ENCODE measurements at regions of chr19 and their contacts with region 1.

Region 1: GRCh38 chr19:2475702-2476450 is at the start of gene GADD45B:
- DNase-seq: peak; percentile 97
- ATAC-seq: peak; percentile 84
- total RNA-seq, gene GADD45B: 42.3 TPM

Region 2: DNA sequence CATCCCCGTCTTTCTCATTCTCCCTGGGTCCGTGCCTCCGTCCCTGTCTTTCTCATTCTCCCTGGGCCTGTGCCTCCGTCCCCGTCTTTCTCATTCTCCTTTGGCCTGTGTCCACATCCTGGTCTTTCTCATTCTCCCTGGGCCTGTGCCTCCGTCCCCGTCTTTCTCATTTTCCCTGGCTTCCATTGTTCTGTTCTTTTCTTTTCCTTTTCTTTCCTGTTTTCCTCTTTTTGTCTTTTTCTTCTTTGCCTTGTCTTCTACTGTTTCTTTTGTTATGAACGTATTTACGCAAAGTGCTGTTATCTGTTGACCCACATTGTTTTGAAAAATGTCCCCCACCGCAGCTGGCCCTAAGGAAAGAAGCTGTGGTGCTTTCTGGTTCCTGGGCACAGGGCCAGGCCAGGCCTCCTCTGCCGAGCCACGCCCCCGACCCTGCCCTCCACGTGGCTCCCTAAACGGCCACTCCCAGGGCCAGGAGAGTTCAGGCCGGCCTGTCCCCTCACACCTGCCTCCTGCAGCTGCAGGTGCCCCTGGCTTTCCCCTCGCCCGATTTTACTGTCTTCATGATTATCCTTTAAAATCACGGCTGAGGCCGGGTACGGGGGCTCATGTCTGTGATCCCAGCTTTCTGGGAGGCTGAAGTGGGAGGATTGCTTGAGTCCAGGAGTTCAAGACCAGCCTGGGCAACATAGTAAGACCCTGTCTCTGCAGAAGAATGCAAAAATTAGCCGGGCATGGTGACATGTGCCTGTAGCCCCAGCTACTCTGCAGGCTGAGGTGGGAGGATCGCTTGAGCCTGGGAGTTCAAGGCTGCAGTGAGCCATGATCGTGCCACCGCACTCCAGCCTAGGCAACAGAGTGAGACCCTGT is 129.8 kb before region 1 on chr19:
- intact Hi-C with region 1: no loop called
- DNase-seq: peak; percentile 74
- ATAC-seq: peak; percentile 63

Region 3: DNA sequence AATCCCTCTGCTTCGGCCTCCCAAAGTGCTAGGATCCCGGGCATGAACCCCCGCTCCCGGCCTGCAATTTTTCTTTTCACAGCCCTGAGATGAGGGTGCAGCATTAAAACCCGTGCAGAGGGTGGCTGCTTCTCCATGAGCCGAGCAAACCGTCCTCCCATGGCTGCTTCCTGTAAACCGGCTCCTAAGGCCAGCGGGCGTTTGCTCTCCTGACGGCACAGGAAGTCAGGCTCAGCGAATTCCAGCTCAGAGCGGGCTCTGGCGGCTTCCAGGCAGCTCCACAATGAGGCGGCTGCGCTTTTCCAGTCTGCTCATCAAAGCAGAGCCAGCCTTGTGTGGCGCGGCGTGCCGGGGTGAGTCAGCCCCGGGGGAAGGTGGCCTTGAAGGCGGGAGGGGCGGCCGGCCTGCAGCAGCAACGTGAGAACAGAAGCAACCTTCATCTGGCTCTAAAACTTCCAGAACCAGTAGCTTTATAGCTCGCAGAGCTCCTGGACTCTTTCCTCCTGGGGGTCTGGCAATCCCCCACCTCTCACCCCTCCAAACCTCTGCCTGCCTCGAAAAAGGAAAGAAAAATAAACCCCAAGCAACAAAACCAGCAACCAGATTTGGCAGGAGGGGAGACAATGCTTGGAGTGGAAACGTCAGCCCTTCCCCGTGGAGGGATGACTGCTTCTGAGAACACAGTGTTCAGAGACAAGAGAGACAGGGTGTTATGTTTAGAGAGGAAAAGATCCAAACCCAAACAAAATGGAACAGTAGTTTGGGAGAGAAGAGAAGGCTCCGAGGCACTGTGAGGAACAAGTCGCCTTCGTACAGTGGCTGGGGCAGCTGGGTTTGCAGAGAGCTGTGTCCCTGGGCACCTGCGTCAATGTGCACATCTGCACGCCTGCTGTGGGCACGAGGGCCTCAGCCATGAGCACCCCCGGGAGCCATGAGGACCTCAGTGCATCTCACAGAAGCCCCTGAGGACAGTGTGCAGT is 67.9 kb after region 1 on chr19:
- intact Hi-C with region 1: loop called (anchors 5 kb)
- DNase-seq: peak; percentile 95
- ATAC-seq: peak; percentile 75

Region 4: DNA sequence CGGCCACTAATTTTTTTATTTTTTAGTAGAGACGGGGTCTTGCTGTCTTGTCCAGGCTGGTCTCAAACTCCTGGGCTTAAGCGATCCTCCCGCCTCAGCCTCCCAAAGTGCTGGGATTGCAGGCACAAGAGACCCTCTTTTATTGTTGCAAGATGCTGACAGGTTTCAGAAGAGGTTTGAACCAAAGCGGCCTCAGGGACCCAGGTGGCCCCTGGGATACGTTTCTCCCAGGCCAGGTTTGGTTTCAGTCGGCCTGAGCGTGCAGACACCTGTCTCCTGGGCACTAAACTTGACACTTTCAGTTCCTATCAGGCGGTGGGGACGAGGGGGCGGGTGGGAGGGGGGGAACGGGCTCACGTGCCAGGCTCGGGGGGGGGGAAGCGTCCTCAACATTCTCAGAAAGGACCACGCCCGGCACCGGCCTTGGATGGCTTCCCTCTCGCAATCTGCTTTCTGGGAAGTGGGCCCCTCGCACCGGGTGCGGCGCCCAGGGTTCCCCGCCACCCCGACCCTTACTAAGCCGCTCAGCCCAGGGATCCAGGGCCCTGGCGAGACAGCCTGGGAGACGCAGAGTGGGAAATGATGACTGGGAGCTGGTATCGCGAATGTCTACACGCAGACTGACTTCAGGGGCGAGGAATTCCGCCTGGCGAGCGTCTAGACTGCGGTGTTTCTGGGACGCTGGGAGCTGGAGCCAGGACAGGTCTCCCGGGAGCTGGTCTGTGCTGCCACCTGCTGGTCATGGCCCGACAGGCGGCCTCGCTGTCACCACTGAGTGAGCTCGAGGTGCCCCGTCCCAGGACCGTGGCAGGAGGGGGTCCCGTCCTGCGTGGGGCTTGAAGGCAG is 135.0 kb after region 1 on chr19:
- intact Hi-C with region 1: loop called (anchors 10 kb)
- DNase-seq: peak; percentile 96
- ATAC-seq: peak; percentile 90

Measured in left ventricle myocardium superior (tissue), 1 donor.